Lower leg skin (tissue), 4 donors: ENCODE measurements at regions of chr2 and their contacts with region 1.

Region 1: GRCh38 chr2:236180831-236181453 is 12.8 kb upstream of the GBX2 start:
- DNase-seq: peak in 1 of 2 donors; percentile 73
- H3K4me3 ChIP-seq: no peak overlapping the region
- CTCF ChIP-seq: no peak
- POLR2A ChIP-seq: no peak

Region 2: GRCh38 chr2:235779444-235779896 is 401.5 kb before region 1 on chr2:
- intact Hi-C with region 1: loop called (anchors 5 kb)
- DNase-seq: peak in 1 of 2 donors; percentile 42
- H3K4me3 ChIP-seq: no peak overlapping the region
- CTCF ChIP-seq: no peak
- POLR2A ChIP-seq: no peak

Region 3: GRCh38 chr2:236089271-236090026 is 91.5 kb before region 1 on chr2:
- intact Hi-C with region 1: no loop called
- DNase-seq: no peak
- H3K4me3 ChIP-seq: no peak overlapping the region
- CTCF ChIP-seq: no peak
- POLR2A ChIP-seq: no peak

Region 4: DNA sequence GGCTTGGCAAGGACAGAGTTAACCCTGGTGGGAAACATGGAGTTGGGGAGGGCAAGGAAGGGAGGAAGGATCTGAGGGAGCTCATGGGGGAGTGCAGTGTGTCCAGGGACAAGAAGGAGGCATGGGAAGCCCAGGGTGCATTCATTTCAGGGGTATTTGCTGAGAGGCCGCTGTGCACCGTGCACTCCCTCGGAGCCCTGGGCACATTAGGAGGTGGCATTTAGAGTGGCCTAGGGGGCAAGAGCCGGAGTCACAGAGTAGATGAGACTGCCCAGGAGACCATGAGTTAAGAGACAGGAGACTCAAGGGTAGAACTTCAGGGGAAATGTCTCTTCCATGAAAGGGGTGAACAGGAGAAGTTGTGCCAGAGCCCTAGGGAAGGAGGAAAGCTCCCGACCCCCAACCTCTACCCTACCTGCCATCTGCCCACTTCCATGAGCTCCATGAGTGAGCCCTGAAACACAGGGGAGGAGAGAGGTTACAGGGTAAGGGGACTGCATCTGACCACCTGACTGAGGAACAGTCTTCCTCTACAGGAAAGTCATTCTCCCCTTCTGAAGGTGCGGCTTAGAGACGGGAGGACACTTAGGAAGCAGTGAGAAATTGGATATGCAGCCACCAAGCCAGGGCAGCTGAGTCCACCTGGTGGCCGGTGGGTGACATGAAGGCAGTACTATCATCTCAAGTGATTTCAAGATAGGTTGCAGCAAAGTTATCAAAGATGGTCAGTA is 846.2 kb after region 1 on chr2:
- intact Hi-C with region 1: no loop called
- DNase-seq: peak; percentile 64 to 93
- H3K4me3 ChIP-seq: no peak overlapping the region
- CTCF ChIP-seq: peak in 1 of 3 donors; percentile 86
- POLR2A ChIP-seq: no peak